ENCODE measurements at regions of chr15 and their contacts with region 1.

Region 1: DNA sequence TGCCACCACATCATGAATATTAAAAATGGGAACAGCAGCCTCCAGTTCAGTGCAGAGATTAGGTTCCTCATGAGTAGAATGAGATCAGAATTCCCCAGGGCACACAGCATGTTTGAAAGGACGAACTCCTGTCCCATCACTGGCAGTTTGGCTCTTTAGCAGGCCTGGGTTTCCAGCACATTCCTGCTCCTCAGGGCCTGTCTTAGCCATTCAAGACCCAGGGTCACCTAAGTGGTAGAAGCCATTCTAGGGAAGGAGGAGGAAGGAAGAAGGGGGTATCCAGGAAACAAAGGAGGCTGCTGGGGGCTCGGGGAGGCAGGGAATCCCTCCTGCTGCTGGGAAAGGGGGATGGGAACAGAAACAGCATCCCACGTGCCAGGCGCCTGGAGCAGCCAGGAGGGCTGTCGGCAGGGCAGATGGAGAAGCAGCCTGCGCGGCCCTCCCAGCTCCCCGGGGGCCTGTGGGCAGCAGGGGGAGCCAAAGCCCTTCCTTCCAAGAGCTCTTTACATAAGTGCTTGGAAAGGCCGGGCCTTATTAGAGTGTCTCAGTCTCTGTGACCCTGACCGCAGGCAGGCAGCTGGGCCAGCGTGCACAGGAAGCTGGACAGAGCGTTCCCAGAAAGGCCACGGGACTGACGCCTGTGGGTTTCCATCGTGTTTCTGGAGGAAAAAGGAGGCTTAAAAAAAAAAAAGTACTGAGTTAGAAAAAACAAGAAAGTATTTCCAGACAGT is 24.7 kb downstream of the LOXL1 start:
- DNase-seq: no peak
- ATAC-seq: peak; percentile 97
- H3K4me3 ChIP-seq: no peak overlapping the region
- H3K27ac ChIP-seq: no peak overlapping the region
- H3K4me1 ChIP-seq: peaks cover 0 to 16% of the 10 kb centered on the region in 2 experiments; a peak in 3 of 4 replicates
- H3K27me3 ChIP-seq: no peaks in the 10 kb centered on the region
- CTCF ChIP-seq: peak; percentile 66 to 93 (median 81)
- POLR2A ChIP-seq: no peak
- RAD21 ChIP-seq: peak; percentile 88

Region 2: DNA sequence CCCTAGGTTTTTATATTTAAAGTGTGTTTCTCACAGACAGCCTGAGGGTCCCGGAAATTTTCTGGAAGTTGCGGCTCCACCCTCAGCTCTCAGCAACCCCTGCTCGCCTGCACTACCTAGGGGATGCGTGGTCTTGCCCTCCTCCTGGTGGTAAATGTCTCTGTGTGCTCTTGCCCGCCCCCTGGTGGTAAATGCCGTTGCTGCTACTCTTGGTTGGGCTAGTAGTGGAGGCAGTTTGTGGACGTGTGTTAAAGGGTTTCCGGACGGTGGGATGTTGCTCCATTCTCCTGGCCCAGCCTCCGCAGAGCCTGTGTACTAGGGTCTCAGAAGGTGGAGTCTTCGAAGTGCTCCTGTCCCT is 13.7 kb after region 1 on chr15:
- CTCF ChIA-PET with region 1: interaction called, 23 read pairs
- POLR2A ChIA-PET with region 1: no interaction called
- RAD21 ChIA-PET with region 1: interaction called in 1 of 2 experiments, 3 read pairs
- intact Hi-C with region 1: loop called (anchors 1 kb)
- DNase-seq: peak; percentile 72
- ATAC-seq: peak; percentile 98
- H3K4me3 ChIP-seq: peak overlapping the region; percentile 30 to 43
- H3K27ac ChIP-seq: no peak overlapping the region; the same call in 1 of the 2 replicates
- H3K4me1 ChIP-seq: peaks cover 8 to 11% of the 10 kb centered on the region in 2 experiments; a peak in 3 of 4 replicates
- H3K27me3 ChIP-seq: no peaks in the 10 kb centered on the region
- CTCF ChIP-seq: peak; percentile 98 to 99 (median 99)
- POLR2A ChIP-seq: no peak
- RAD21 ChIP-seq: peak; percentile 81

Region 3: GRCh38 chr15:74036271-74037170 is 85.5 kb after region 1 on chr15:
- CTCF ChIA-PET with region 1: interaction called, 16 read pairs
- POLR2A ChIA-PET with region 1: no interaction called
- RAD21 ChIA-PET with region 1: no interaction called
- intact Hi-C with region 1: no loop called
- DNase-seq: peak; percentile 22
- ATAC-seq: peak; percentile 91
- H3K4me3 ChIP-seq: no peak overlapping the region
- H3K27ac ChIP-seq: no peak overlapping the region
- H3K4me1 ChIP-seq: peaks cover 0 to 9% of the 10 kb centered on the region in 2 experiments; a peak in 1 of 4 replicates
- H3K27me3 ChIP-seq: no peaks in the 10 kb centered on the region
- CTCF ChIP-seq: peak; percentile 28 to 62 (median 54); a peak in 5 of 6 replicates
- POLR2A ChIP-seq: no peak
- RAD21 ChIP-seq: peak; percentile 56

Region 4: DNA sequence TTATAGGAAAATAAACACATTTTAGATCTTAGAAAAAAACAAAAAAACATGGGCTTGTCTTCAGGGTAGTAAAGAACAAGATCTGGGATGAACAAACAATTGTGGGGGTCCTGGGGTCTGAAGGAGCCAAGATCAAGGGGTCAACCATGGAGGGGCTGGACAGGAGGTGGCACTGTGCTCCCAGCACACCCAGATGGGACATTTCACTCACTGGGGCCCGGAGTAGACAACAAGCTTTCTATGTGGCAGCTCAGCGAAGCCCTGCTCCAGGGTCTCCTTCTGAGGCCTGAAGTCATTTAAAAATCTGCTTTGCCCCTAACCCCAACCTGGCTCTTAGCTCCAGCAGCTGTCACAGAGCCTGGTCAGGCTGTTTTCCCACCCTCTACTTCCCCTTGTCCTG is 96.8 kb after region 1 on chr15:
- CTCF ChIA-PET with region 1: interaction called, 10 read pairs
- POLR2A ChIA-PET with region 1: no interaction called
- RAD21 ChIA-PET with region 1: no interaction called
- intact Hi-C with region 1: no loop called
- DNase-seq: no peak
- ATAC-seq: no peak
- H3K4me3 ChIP-seq: no peak overlapping the region
- H3K27ac ChIP-seq: no peak overlapping the region
- H3K4me1 ChIP-seq: peaks cover 7 to 10% of the 10 kb centered on the region in 2 experiments
- H3K27me3 ChIP-seq: no peaks in the 10 kb centered on the region
- CTCF ChIP-seq: no peak
- POLR2A ChIP-seq: no peak
- RAD21 ChIP-seq: no peak